ENCODE measurements at regions of chr12 and their contacts with region 1.

Region 1: GRCh38 chr12:28872654-28873268 is 276.3 kb upstream of the FAR2 start:
- DNase-seq: peak; percentile 100
- ATAC-seq: peak; percentile 37
- H3K4me3 ChIP-seq: no peak overlapping the region
- H3K27ac ChIP-seq: peak overlapping the region; percentile 78
- H3K4me1 ChIP-seq: peaks cover 48% of the 10 kb centered on the region
- H3K27me3 ChIP-seq: no peaks in the 10 kb centered on the region
- CTCF ChIP-seq: no peak

Region 2: DNA sequence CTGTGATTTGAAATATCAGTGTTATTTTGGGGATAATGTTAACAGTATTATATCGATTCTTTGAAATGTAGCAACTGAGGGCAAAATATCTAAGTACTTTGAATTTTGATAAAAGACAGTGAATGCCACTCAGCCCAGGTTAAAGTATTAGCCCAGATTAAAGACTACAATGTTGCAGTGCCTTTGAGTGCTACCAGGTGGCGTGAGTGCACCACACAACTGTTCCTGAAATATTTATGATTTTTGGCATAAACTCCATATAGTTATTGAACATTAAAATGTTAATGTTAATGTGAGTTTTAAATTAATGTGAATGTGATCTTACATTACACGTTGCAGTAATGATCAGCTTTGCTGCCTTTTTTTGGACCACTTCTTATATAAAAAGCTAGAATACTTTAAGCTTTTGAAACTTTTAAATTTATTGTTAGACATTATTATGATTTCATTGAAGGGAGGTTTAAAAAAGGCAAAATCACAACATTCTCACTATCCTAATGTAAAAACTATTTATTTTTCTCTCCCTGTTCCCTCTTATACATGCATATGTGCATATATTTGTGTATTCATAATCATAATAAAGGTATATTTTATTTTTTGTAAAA is 1139.6 kb before region 1 on chr12:
- CTCF ChIA-PET with region 1: no interaction called
- POLR2A ChIA-PET with region 1: no interaction called
- intact Hi-C with region 1: loop called (anchors 1 kb)
- DNase-seq: peak; percentile 82
- ATAC-seq: peak; percentile 47
- H3K4me3 ChIP-seq: no peak overlapping the region
- H3K27ac ChIP-seq: no peak overlapping the region
- H3K4me1 ChIP-seq: 0 out of 2 replicates have a peak, but pooled peaks cover 4% of the 10 kb centered on the region
- H3K27me3 ChIP-seq: no peaks in the 10 kb centered on the region
- CTCF ChIP-seq: peak; percentile 98

Region 3: GRCh38 chr12:28057856-28058615 is 814.7 kb before region 1 on chr12:
- CTCF ChIA-PET with region 1: no interaction called
- POLR2A ChIA-PET with region 1: no interaction called
- intact Hi-C with region 1: loop called (anchors 5 kb)
- DNase-seq: peak; percentile 100
- ATAC-seq: peak; percentile 83
- H3K4me3 ChIP-seq: no peak overlapping the region; the same call in 1 of the 2 replicates
- H3K27ac ChIP-seq: peak overlapping the region; percentile 86
- H3K4me1 ChIP-seq: peaks cover 23% of the 10 kb centered on the region
- H3K27me3 ChIP-seq: no peaks in the 10 kb centered on the region
- CTCF ChIP-seq: no peak

Region 4: DNA sequence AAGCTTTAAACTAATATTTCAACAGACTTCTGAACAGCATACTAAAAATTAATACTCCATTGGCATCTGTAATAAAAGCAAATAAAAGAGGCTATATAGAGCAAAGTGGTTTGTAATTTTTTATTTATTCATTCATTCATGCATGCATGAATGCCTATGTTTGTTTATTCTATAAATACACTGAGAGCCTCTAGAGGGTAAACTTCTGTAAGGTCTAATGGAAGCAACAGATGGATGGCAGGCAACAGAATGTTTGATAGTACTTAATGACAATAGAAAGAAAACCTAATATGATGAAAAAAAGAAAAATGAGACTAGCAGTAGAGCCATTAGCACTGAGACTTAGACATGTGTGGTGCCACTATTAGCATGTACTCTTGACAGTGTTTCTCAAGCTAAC is 429.4 kb before region 1 on chr12:
- CTCF ChIA-PET with region 1: interaction called, 6 read pairs
- POLR2A ChIA-PET with region 1: no interaction called
- intact Hi-C with region 1: loop called (anchors 5 kb)
- DNase-seq: peak; percentile 34
- ATAC-seq: peak; percentile 83
- H3K4me3 ChIP-seq: no peak overlapping the region
- H3K27ac ChIP-seq: no peak overlapping the region
- H3K4me1 ChIP-seq: peaks cover 6% of the 10 kb centered on the region; the same call in 1 of the 2 replicates
- H3K27me3 ChIP-seq: no peaks in the 10 kb centered on the region
- CTCF ChIP-seq: no peak

Region 5: GRCh38 chr12:28704477-28705169 is 168.1 kb before region 1 on chr12:
- CTCF ChIA-PET with region 1: no interaction called
- POLR2A ChIA-PET with region 1: no interaction called
- intact Hi-C with region 1: no loop called
- DNase-seq: peak; percentile 63
- ATAC-seq: peak; percentile 93
- H3K4me3 ChIP-seq: no peak overlapping the region
- H3K27ac ChIP-seq: no peak overlapping the region
- H3K4me1 ChIP-seq: peaks cover 9% of the 10 kb centered on the region
- H3K27me3 ChIP-seq: no peaks in the 10 kb centered on the region
- CTCF ChIP-seq: no peak

Region 6: DNA sequence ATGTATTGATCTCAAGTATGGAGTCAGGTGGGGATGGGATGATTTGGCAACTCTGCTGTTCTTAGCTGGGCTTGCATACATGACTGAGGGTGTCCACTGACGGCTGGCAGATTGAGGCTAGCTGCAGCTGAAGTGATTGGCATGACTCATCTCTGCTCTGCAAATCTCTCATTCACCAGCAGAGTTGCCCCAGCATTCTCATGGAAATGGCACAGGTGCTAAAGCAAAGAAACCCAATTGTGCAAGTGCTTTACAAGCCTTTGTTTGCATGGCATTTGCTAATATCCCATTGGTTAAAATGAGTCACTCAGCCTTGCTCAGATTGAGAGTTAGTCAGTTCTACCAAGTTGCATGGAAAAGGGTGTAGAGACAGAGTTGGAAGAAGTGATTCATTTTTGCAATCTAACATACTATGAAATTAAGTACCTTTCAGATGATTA is 113.4 kb before region 1 on chr12:
- CTCF ChIA-PET with region 1: no interaction called
- POLR2A ChIA-PET with region 1: no interaction called
- intact Hi-C with region 1: loop called (anchors 1 kb)
- DNase-seq: peak; percentile 100
- ATAC-seq: peak; percentile 99
- H3K4me3 ChIP-seq: no peak overlapping the region
- H3K27ac ChIP-seq: peak overlapping the region; percentile 73
- H3K4me1 ChIP-seq: peaks cover 15% of the 10 kb centered on the region
- H3K27me3 ChIP-seq: no peaks in the 10 kb centered on the region
- CTCF ChIP-seq: peak; percentile 65

Region 7: GRCh38 chr12:28800129-28800528 is 72.6 kb before region 1 on chr12:
- CTCF ChIA-PET with region 1: no interaction called
- POLR2A ChIA-PET with region 1: no interaction called
- intact Hi-C with region 1: no loop called
- DNase-seq: no peak
- ATAC-seq: no peak
- H3K4me3 ChIP-seq: no peak overlapping the region
- H3K27ac ChIP-seq: no peak overlapping the region
- H3K4me1 ChIP-seq: peaks cover 17% of the 10 kb centered on the region
- H3K27me3 ChIP-seq: no peaks in the 10 kb centered on the region
- CTCF ChIP-seq: no peak

Region 8: DNA sequence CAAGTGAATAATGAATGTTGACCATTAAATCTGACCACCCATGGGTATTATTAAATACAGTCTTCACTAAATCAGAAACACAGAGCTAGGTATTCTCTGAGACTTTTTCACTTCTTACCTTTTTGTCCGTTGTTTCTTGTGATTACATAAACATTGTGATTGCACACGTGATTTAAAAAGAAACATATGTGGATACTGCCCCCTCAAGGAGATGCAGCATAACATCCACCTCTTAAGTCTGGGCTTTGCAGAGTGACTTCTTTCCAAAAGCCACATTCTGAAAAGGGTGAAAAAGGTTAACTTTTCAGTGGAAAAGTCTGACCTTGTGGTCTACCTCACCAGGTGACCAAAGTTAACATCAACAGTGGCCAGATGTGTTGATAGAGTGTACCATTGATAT is 90.8 kb after region 1 on chr12:
- CTCF ChIA-PET with region 1: interaction called, 4 read pairs
- POLR2A ChIA-PET with region 1: interaction called, 4 read pairs
- intact Hi-C with region 1: loop called (anchors 1 kb)
- DNase-seq: peak; percentile 95
- ATAC-seq: peak; percentile 63
- H3K4me3 ChIP-seq: no peak overlapping the region
- H3K27ac ChIP-seq: no peak overlapping the region
- H3K4me1 ChIP-seq: peaks cover 19% of the 10 kb centered on the region
- H3K27me3 ChIP-seq: no peaks in the 10 kb centered on the region
- CTCF ChIP-seq: peak; percentile 100

Region 9: DNA sequence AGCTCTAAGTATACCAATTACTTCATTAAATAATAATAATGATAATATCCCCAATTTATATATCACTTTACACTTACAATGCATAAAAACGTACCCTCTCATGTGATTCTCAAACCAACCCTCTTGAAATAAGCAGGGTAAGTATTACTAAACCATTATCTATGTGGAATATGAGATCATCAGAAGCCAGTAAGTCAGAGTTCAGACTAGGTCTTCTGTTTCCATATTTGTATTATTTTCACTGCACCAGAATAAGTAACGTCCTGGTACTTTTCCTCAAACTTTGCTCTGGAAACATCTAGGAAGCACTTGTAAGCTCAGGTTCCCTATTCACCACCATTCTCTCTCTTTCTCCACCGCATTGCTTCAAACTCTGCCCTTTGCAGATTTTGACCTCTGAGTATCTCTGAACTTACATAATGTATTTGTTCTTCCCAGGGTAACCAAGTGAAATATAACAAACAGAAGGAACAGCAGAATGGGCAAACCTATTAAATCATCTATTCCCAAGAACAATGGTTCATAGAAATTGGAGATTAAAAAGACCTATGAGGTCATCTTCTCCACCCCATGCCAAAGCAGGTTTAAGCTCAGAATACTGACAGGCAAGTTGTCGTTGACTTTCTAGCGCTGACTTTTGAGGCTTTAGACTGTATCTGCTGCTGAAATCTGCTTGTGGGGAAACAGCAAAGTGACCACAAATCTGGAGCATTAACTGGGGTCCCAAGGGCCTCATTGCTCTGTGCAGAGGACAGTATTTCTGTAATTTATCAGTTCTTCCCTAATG is 115.0 kb after region 1 on chr12:
- CTCF ChIA-PET with region 1: no interaction called
- POLR2A ChIA-PET with region 1: no interaction called
- intact Hi-C with region 1: no loop called
- DNase-seq: peak; percentile 53
- ATAC-seq: peak; percentile 52
- H3K4me3 ChIP-seq: no peak overlapping the region
- H3K27ac ChIP-seq: 0 out of 2 replicates have a peak overlapping the region, but pooled peaks have one; percentile 1
- H3K4me1 ChIP-seq: peaks cover 10% of the 10 kb centered on the region
- H3K27me3 ChIP-seq: no peaks in the 10 kb centered on the region
- CTCF ChIP-seq: no peak